Psoas muscle (tissue), 8 donors: ENCODE measurements at regions of chr6 and their contacts with region 1.

Region 1: DNA sequence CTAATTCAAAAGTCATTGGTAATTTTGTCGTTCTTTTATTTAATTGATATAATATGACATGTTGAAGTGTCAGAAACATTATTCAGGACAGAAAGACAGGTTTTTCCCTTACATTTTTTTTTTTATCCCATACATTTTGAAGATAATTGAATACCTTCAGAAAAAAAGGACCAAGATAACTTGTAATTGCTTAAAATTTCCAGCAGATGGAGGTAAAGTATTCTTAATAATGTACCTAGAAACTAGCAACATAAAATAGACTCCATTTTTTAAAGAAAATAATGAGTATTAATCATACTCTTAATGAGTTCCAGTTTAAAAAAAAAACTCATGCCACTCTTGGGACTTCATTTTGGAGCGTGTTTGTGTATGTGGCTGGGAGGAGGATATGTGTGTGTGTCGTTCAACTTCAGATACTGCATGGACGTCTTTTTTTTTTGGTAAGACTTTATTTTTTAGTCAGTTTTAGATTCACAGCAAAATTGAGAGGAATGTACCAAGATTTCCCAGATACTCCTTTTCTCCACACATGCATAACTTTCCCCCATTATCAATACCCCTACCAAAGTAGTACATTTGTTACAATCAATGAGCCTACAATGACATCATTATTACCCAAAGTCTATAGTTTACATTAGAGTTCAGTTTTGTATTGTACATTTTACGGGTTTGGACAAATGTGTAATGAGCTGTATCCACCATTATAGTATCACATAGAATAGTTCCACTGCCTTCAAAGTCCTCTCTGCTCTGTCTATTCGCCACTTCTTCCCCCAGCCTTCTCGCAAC is 79.4 kb downstream of the ROS1 start:
- DNase-seq: no peak
- ATAC-seq: peak in 3 of 4 donors; percentile 34 to 74 (median 37)
- H3K4me3 ChIP-seq: peak overlapping the region; percentile 35
- H3K27ac ChIP-seq: no peak overlapping the region
- H3K4me1 ChIP-seq: no peaks in the 10 kb centered on the region
- H3K27me3 ChIP-seq: no peaks in the 10 kb centered on the region
- CTCF ChIP-seq: peak; percentile 65

Region 2: GRCh38 chr6:117482240-117483003 is 136.1 kb after region 1 on chr6 and contains the start of gene DCBLD1:
- intact Hi-C with region 1: no loop called
- DNase-seq: peak; percentile 80 to 87
- ATAC-seq: peak; percentile 81 to 86 (median 82)
- H3K4me3 ChIP-seq: peak within 1 kb of the TSS; percentile 88
- H3K27ac ChIP-seq: peak within 1 kb of the TSS; percentile 93
- H3K4me1 ChIP-seq: peaks cover 13% of the 10 kb centered on the region
- H3K27me3 ChIP-seq: no peaks in the 10 kb centered on the region
- CTCF ChIP-seq: peak; percentile 5
- total RNA-seq, gene DCBLD1: 4.0 to 9.0 (median 5.2) TPM

Region 3: DNA sequence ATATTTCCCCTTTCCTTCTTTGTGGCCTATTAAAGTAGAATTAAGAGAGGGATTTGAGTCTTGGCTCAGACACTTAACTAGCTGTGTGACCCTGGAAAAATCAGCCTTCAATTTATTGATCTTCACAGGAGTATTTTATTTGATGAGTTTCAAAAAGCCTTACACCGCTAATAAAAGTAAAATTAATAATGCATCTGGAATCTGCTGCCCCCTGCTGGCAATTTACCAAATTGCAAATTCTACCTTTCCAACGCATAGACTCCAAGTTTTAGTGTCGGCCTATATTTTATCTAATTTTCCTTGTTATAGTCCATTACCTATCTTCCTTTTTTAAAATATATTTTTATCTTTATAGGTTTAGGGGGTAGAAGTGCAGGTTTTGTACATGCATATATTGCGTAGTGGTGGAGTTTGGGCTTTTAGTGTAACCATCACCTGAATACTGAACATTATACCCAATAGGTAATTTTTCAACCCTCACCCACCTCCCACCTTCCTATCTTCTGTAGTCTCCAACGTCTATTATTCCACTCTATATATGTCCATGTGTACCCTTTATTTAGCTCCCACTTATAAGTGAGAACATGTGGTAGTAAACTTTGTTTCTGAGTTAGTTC is 209.7 kb after region 1 on chr6:
- intact Hi-C with region 1: loop called (anchors 2 to 5 kb)
- DNase-seq: no peak
- ATAC-seq: peak in 1 of 4 donors; percentile 73
- H3K4me3 ChIP-seq: no peak overlapping the region
- H3K27ac ChIP-seq: no peak overlapping the region
- H3K4me1 ChIP-seq: peaks cover 7% of the 10 kb centered on the region
- H3K27me3 ChIP-seq: no peaks in the 10 kb centered on the region
- CTCF ChIP-seq: peak; percentile 90

Region 4: DNA sequence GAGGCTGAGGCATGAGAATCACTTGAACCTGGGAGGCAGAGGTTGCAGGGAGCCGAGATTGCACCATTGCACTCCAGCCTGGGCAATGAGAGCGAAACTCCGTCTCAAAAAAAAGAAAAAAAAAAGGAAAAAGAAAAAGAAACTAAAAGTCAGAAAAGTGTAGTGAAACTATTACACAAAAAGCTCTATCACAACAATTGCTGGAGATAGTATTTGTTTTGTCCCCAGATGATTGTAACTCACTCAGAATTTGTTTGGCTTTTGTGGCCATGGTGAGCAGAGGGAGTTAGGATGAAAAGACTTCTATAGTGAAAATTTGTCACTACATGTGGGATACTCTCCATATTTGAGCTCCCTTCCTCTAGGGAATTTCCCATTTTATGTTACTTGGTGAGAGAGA is 261.2 kb after region 1 on chr6:
- intact Hi-C with region 1: loop called (anchors 2 kb)
- DNase-seq: no peak
- ATAC-seq: no peak
- H3K4me3 ChIP-seq: no peak overlapping the region
- H3K27ac ChIP-seq: no peak overlapping the region
- H3K4me1 ChIP-seq: peaks cover 6% of the 10 kb centered on the region
- H3K27me3 ChIP-seq: no peaks in the 10 kb centered on the region
- CTCF ChIP-seq: no peak